H1 (cell line): ENCODE measurements at regions of chr11 and their contacts with region 1.

Region 1: GRCh38 chr11:62980133-62980760 is 4.5 kb downstream of the SLC22A6 start:
- DNase-seq: no peak
- H3K4me3 ChIP-seq: no peak overlapping the region
- H3K27ac ChIP-seq: no peak overlapping the region
- H3K4me1 ChIP-seq: peaks cover 0 to 2% (median under 1%) of the 10 kb centered on the region in 4 experiments; a peak in 2 of 7 replicates
- H3K27me3 ChIP-seq: no peaks in the 10 kb centered on the region; a peak in 2 of 7 replicates
- CTCF ChIP-seq: no peak
- EP300 ChIP-seq: no peak
- POLR2A ChIP-seq: no peak
- RAD21 ChIP-seq: no peak

Region 2: DNA sequence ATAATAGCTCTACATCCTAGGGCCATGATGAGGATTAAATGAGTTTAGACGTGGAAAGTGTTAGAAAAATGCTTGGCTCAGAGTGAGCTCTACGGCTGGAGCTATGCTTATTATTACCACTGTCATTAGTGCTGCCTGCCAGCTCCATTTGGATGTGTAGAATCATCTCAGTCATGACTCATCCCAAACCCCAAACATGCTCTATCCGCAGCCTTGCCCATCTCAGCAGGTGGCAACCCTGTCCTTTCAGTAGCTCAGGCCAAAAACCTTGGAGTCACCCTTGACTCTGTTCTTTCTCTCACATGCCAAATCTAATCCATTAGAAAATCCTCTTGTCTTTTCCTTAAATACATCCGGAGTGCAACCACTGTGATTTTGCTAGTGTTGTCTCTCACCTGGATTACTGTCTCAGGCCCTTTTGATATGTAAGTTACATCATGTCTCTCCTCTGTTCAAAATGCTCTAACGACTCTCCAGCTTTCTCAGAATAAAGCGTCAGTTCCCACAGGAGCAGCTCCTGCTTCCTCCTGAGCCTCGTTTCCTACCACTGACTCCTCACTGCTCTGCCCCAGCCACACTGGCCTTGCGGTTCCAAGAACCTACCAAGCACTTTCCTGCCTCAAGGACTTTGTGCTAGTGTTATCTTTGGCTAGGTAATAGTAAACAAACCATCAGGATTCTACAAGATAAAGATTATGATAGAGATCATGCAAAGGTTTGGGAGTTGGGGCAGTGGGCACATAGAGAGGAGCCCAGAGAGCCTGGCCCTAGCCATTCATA is 48.6 kb before region 1 on chr11:
- CTCF ChIA-PET with region 1: interaction called, 18 read pairs
- POLR2A ChIA-PET with region 1: no interaction called
- DNase-seq: no peak
- H3K4me3 ChIP-seq: no peak overlapping the region
- H3K27ac ChIP-seq: no peak overlapping the region
- H3K4me1 ChIP-seq: peaks cover 6 to 14% (median 9%) of the 10 kb centered on the region in 4 experiments; a peak in 5 of 7 replicates
- H3K27me3 ChIP-seq: peaks cover 10 to 26% (median 21%) of the 10 kb centered on the region in 4 experiments
- CTCF ChIP-seq: no peak
- EP300 ChIP-seq: no peak
- POLR2A ChIP-seq: no peak
- RAD21 ChIP-seq: no peak